ENCODE measurements at regions of chr7 and their contacts with region 1.

Region 1: DNA sequence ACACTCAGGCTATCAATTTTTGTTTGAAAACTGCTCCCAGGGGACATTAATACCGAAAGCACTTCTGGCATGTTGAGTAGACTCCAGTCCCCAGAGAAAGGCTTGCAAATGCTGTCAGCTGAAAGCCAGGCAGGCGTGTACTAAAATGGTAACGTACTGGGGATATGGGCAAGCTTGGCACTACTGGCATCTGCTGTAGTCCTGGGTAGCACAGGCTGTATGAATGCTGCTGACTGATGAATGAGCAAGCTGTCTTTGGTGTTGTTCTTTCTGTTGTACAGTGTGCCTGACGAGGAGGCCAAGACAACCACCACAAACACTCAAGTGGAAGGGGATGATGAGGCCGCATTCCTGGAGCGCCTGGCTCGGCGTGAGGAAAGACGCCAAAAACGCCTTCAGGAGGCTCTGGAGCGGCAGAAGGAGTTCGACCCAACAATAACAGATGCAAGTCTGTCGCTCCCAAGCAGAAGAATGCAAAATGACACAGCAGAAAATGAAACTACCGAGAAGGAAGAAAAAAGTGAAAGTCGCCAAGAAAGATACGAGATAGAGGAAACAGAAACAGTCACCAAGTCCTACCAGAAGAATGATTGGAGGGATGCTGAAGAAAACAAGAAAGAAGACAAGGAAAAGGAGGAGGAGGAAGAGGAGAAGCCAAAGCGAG is 53.5 kb upstream of the AGBL3 start:
- DNase-seq: no peak
- H3K4me3 ChIP-seq: no peak overlapping the region
- H3K27ac ChIP-seq: no peak overlapping the region
- H3K4me1 ChIP-seq: no peaks in the 10 kb centered on the region
- H3K27me3 ChIP-seq: no peaks in the 10 kb centered on the region
- CTCF ChIP-seq: no peak

Region 2: GRCh38 chr7:135994466-135995205 is 1061.8 kb after region 1 on chr7:
- CTCF ChIA-PET with region 1: no interaction called
- POLR2A ChIA-PET with region 1: interaction called, 15 read pairs
- intact Hi-C with region 1: no loop called
- DNase-seq: no peak
- H3K4me3 ChIP-seq: no peak overlapping the region
- H3K27ac ChIP-seq: no peak overlapping the region
- H3K4me1 ChIP-seq: peaks cover 44% of the 10 kb centered on the region
- H3K27me3 ChIP-seq: no peaks in the 10 kb centered on the region
- CTCF ChIP-seq: no peak